H1 (cell line): ENCODE measurements at regions of chr1 and their contacts with region 1.

Region 1: GRCh38 chr1:38586993-38587646 is 272.5 kb downstream of the RRAGC start:
- DNase-seq: peak; percentile 46 to 90
- H3K4me3 ChIP-seq: no peak overlapping the region
- H3K27ac ChIP-seq: no peak overlapping the region
- H3K4me1 ChIP-seq: no peaks in the 10 kb centered on the region; a peak in 2 of 7 replicates
- H3K27me3 ChIP-seq: no peaks in the 10 kb centered on the region
- CTCF ChIP-seq: peak; percentile 89 to 99 (median 93)
- EP300 ChIP-seq: no peak
- POLR2A ChIP-seq: no peak
- RAD21 ChIP-seq: peak; percentile 86 to 89

Region 2: DNA sequence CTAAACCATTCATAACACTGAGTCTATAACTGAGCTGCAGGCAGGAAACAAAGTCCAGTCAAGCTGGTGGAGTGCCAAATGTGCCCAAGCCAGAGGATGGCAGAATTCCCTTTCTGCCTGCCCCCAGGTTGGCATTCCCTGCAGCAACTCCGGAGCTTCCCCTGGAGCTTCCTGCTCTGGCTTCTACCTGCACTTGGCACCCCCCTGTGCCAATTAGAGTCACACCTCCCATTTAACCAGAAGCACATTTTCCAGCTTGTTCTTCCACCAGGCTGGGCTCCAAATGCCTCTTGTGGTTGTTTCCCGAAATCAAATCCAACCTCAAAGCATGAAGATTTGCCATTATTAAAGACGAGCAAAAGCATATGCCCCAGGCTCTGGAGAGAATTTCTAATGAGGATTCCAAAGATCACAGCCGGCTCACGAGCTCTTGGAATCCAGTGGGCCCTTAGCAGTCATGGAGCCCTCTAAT is 22.1 kb before region 1 on chr1:
- CTCF ChIA-PET with region 1: interaction called, 14 read pairs
- POLR2A ChIA-PET with region 1: no interaction called
- DNase-seq: no peak
- H3K4me3 ChIP-seq: no peak overlapping the region
- H3K27ac ChIP-seq: no peak overlapping the region
- H3K4me1 ChIP-seq: peaks cover 0 to 3% (median 2%) of the 10 kb centered on the region in 4 experiments; a peak in 5 of 7 replicates
- H3K27me3 ChIP-seq: peaks cover 0 to 8% (median 6%) of the 10 kb centered on the region in 4 experiments; a peak in 4 of 7 replicates
- CTCF ChIP-seq: no peak
- EP300 ChIP-seq: no peak
- POLR2A ChIP-seq: no peak
- RAD21 ChIP-seq: no peak

Region 3: GRCh38 chr1:38571726-38572125 is 15.4 kb before region 1 on chr1:
- CTCF ChIA-PET with region 1: interaction called, 19 read pairs
- POLR2A ChIA-PET with region 1: no interaction called
- DNase-seq: no peak
- H3K4me3 ChIP-seq: no peak overlapping the region
- H3K27ac ChIP-seq: no peak overlapping the region
- H3K4me1 ChIP-seq: peaks cover 0 to 6% (median 4%) of the 10 kb centered on the region in 4 experiments; a peak in 3 of 7 replicates
- H3K27me3 ChIP-seq: peaks cover 0 to under 1% (median 0%) of the 10 kb centered on the region in 4 experiments; a peak in 2 of 7 replicates
- CTCF ChIP-seq: no peak
- EP300 ChIP-seq: no peak
- POLR2A ChIP-seq: no peak
- RAD21 ChIP-seq: no peak

Region 4: GRCh38 chr1:38600286-38600685 is 13.2 kb after region 1 on chr1:
- CTCF ChIA-PET with region 1: interaction called, 10 read pairs
- POLR2A ChIA-PET with region 1: no interaction called
- DNase-seq: no peak
- H3K4me3 ChIP-seq: no peak overlapping the region
- H3K27ac ChIP-seq: no peak overlapping the region
- H3K4me1 ChIP-seq: peaks cover 0 to 3% (median 0%) of the 10 kb centered on the region in 4 experiments; a peak in 2 of 7 replicates
- H3K27me3 ChIP-seq: peaks cover 8 to 56% (median 37%) of the 10 kb centered on the region in 4 experiments
- CTCF ChIP-seq: no peak
- EP300 ChIP-seq: no peak
- POLR2A ChIP-seq: no peak
- RAD21 ChIP-seq: no peak